ENCODE measurements at regions of chr13 and their contacts with region 1.

Region 1: GRCh38 chr13:71290963-71291841 is 575.8 kb downstream of the DACH1 start:
- DNase-seq: peak; percentile 49
- H3K4me3 Mint-ChIP-seq: peak overlapping the region; percentile 73
- H3K27ac Mint-ChIP-seq: peak overlapping the region; percentile 61
- H3K4me1 Mint-ChIP-seq: peaks cover 18% of the 10 kb centered on the region
- H3K27me3 Mint-ChIP-seq: peaks cover 5% of the 10 kb centered on the region

Region 2: DNA sequence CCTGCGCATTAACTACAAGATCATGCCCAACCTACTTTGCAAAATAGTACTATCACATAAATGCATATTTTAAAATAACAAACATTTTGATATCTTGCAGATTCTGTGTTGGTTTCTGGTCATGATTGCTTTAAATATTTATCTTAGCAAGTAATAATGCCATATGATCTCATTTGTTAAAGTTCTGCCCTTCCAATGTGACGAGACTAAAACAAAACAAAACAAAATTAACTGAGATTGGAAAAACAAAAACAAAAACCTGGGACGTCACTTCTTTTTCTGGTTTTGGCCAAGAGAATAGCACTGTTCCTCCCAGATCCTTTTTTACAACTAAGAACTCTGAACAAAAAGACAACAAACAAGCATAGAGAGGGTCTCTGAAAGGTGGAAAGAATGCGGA is 139.5 kb after region 1 on chr13:
- CTCF ChIA-PET with region 1: no interaction called
- intact Hi-C with region 1: no loop called
- DNase-seq: no peak
- H3K4me3 Mint-ChIP-seq: no peak overlapping the region
- H3K27ac Mint-ChIP-seq: no peak overlapping the region
- H3K4me1 Mint-ChIP-seq: no peaks in the 10 kb centered on the region
- H3K27me3 Mint-ChIP-seq: no peaks in the 10 kb centered on the region

Region 3: GRCh38 chr13:72727417-72728289 is 1436.5 kb after region 1 on chr13 and contains the starts of genes BORA and MZT1:
- CTCF ChIA-PET with region 1: no interaction called
- intact Hi-C with region 1: loop called (anchors 2 kb)
- DNase-seq: peak; percentile 97
- H3K4me3 Mint-ChIP-seq: peak within 1 kb of the TSS; percentile 90
- H3K27ac Mint-ChIP-seq: peak within 1 kb of the TSS; percentile 81
- H3K4me1 Mint-ChIP-seq: peaks cover 41% of the 10 kb centered on the region
- H3K27me3 Mint-ChIP-seq: no peaks in the 10 kb centered on the region
- total RNA-seq, gene BORA: 17.3 to 19.5 TPM
- total RNA-seq, gene MZT1: 32.4 to 32.9 TPM

Region 4: GRCh38 chr13:73228546-73228945 is 1937.3 kb after region 1 on chr13:
- CTCF ChIA-PET with region 1: no interaction called
- intact Hi-C with region 1: loop called (anchors 5 kb)
- DNase-seq: peak; percentile 37
- H3K4me3 Mint-ChIP-seq: no peak overlapping the region
- H3K27ac Mint-ChIP-seq: peak overlapping the region; percentile 36
- H3K4me1 Mint-ChIP-seq: peaks cover 42% of the 10 kb centered on the region
- H3K27me3 Mint-ChIP-seq: no peaks in the 10 kb centered on the region

Measured in activated naive CD4-positive, alpha-beta T cell treated with anti-CD3 and anti-CD28 coated beads for 36 hours (primary cell).